ENCODE measurements at regions of chr10 and their contacts with region 1.

Region 1: DNA sequence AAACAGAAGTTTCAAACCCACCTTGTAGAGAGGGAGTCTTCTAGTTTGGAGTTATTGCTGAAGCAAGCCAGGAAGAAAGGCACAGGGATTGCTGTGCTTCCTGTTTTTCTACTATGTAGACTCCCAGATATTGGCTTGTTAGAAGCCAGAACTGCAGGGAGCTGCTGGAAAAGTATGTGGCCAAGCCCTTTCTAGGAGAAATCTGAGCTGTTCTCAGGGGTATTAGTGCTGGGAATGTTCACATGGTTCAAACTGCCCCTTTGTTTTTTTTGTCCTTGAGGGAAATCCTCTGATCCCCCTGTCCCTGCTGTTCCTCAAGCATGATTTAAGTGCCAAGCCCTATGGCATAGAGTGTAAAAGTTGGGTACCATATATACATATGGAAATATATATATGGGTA is 184.0 kb downstream of the CCDC7 start:
- DNase-seq: no peak
- ATAC-seq: no peak
- H3K4me3 ChIP-seq: no peak overlapping the region
- H3K4me3 Mint-ChIP-seq: no peak overlapping the region
- H3K27ac ChIP-seq: no peak overlapping the region
- H3K27ac Mint-ChIP-seq: no peak overlapping the region
- H3K4me1 ChIP-seq: no peaks in the 10 kb centered on the region
- H3K4me1 Mint-ChIP-seq: no peaks in the 10 kb centered on the region
- H3K27me3 ChIP-seq: no peaks in the 10 kb centered on the region
- H3K27me3 Mint-ChIP-seq: no peaks in the 10 kb centered on the region

Region 2: GRCh38 chr10:32646535-32646934 is 16.6 kb after region 1 on chr10:
- CTCF ChIA-PET with region 1: no interaction called
- POLR2A ChIA-PET with region 1: interaction called in 1 of 2 experiments, 11 read pairs
- DNase-seq: no peak
- ATAC-seq: no peak
- H3K4me3 ChIP-seq: no peak overlapping the region
- H3K4me3 Mint-ChIP-seq: no peak overlapping the region
- H3K27ac ChIP-seq: no peak overlapping the region
- H3K27ac Mint-ChIP-seq: no peak overlapping the region
- H3K4me1 ChIP-seq: peaks cover 0 to 6% of the 10 kb centered on the region in 2 experiments
- H3K4me1 Mint-ChIP-seq: peaks cover 8 to 22% (median 12%) of the 10 kb centered on the region in 3 donors
- H3K27me3 ChIP-seq: no peaks in the 10 kb centered on the region
- H3K27me3 Mint-ChIP-seq: no peaks in the 10 kb centered on the region